ENCODE measurements at regions of chr22 and their contacts with region 1.

Region 1: DNA sequence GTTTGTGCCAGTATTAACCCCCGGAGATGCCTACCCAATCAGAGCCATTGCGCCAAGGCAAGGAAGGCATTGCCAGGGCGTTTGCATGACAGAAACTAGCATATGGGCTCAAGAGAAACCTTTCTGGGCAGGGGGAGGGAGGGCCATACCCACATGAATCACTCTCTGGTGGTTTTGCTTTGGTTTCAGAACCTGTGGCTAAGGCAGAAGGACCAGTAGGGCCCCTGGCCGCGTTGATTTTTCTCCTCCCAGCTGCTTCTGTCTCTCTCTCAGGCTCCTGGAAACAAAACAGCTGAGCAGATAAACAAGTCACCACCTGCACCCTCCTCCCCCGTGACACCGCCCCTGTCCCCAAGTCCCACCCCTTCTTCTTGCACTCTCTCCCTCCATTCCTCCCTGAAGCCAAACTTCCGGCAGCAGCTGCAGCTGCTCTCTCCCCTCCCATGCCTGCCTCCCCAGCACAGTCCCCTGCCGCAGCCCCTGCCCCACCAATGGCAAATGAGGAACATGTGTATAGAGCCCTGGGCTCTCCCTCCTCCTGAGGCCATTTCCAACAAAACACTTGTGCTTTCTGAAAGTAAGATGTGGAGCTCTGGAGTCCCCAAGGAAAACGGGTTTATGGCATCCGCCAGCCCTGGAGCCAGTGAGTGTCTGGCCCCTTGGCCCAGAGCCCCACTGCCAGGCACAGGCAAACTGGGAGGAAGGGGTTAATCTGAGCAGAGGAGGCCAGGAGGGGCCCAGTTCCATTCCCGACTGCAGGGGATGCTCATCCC is 39.0 kb upstream of the ADA2 start:
- DNase-seq: peak; percentile 77 to 87 (median 79)
- H3K4me3 ChIP-seq: peak overlapping the region in 1 of 3 experiments; percentile 52
- H3K4me3 Mint-ChIP-seq: peak overlapping the region; percentile 61 to 63
- H3K27ac ChIP-seq: peak overlapping the region; percentile 36 to 63
- H3K27ac Mint-ChIP-seq: peak overlapping the region; percentile 74 to 92 (median 89)
- H3K4me1 ChIP-seq: peaks cover 17 to 18% of the 10 kb centered on the region in 2 donors
- H3K4me1 Mint-ChIP-seq: peaks cover 22% of the 10 kb centered on the region
- H3K27me3 ChIP-seq: no peaks in the 10 kb centered on the region
- H3K27me3 Mint-ChIP-seq: peaks cover 1 to 6% (median 5%) of the 10 kb centered on the region in 3 donors
- CTCF ChIP-seq: no peak

Region 2: GRCh38 chr22:17222503-17222902 is 35.7 kb before region 1 on chr22:
- intact Hi-C with region 1: loop called (anchors 5 kb)
- DNase-seq: no peak
- H3K4me3 ChIP-seq: no peak overlapping the region
- H3K4me3 Mint-ChIP-seq: no peak overlapping the region
- H3K27ac ChIP-seq: no peak overlapping the region
- H3K27ac Mint-ChIP-seq: peak overlapping the region in 3 of 7 donors; percentile 13 to 65 (median 31)
- H3K4me1 ChIP-seq: peaks cover 31 to 52% of the 10 kb centered on the region in 2 donors
- H3K4me1 Mint-ChIP-seq: peaks cover 46% of the 10 kb centered on the region
- H3K27me3 ChIP-seq: no peaks in the 10 kb centered on the region
- H3K27me3 Mint-ChIP-seq: peaks cover 0 to 3% (median 1%) of the 10 kb centered on the region in 3 donors
- CTCF ChIP-seq: no peak

Region 3: DNA sequence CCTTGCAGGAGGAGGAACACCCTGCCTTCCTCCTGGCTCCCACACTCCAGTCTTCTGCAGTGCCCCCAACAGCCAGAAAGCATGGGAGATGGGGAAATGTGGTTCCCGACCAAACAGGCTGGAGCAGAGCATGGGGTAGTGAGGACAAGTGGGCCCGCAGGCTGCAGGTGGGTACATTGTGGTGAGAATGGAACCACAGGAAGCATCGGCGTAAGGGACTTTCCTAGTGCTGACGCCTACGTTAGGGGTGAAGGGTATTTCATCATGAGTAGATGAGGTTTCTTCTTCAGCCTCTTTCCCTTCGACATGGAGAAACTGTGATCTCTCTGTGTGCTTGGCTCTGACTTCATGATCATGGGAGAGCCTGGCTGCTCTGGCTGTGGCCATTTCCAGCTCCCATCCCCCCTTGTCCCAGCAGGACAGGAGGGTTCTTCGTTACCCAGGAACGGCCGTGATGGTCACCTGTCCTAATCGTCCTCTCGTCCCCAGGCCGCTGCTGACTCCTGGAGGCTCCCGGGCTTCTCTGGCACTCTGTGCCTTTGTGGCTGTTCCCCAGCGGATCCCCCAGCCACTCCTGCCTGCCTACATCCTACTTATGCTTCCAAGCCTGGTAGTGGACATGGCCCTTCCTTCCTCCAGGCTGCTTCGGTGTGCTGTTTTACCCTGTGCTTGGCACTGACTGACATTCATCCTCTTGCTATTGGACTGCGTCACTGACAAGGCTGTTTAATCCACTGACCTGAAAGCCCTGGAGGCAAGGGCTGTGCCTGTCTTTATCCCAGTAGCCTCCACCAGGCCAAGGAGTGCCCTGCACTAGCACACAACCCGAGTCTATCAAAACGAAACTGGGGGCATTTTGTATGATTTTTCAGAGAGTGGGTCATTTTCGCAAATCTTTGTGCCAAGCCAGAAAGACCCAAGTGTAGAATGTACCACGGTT is 45.9 kb after region 1 on chr22:
- intact Hi-C with region 1: no loop called
- DNase-seq: peak in 1 of 3 donors; percentile 45
- H3K4me3 ChIP-seq: no peak overlapping the region
- H3K4me3 Mint-ChIP-seq: no peak overlapping the region
- H3K27ac ChIP-seq: no peak overlapping the region
- H3K27ac Mint-ChIP-seq: peak overlapping the region in 2 of 7 donors; percentile 15 to 44
- H3K4me1 ChIP-seq: no peaks in the 10 kb centered on the region
- H3K4me1 Mint-ChIP-seq: no peaks in the 10 kb centered on the region
- H3K27me3 ChIP-seq: no peaks in the 10 kb centered on the region
- H3K27me3 Mint-ChIP-seq: peaks cover 0 to 2% (median 1%) of the 10 kb centered on the region in 3 donors
- CTCF ChIP-seq: no peak